ENCODE measurements at regions of chr2 and their contacts with region 1.

Region 1: GRCh38 chr2:168712049-168712448 is 90.4 kb upstream of the NOSTRIN start:
- DNase-seq: no peak
- H3K4me3 ChIP-seq: no peak overlapping the region
- H3K27ac ChIP-seq: no peak overlapping the region
- H3K4me1 ChIP-seq: no peaks in the 10 kb centered on the region
- H3K27me3 ChIP-seq: no peaks in the 10 kb centered on the region
- CTCF ChIP-seq: no peak

Region 2: GRCh38 chr2:168534926-168535325 is 177.1 kb before region 1 on chr2:
- CTCF ChIA-PET with region 1: no interaction called
- POLR2A ChIA-PET with region 1: no interaction called
- intact Hi-C with region 1: no loop called
- DNase-seq: no peak
- H3K4me3 ChIP-seq: no peak overlapping the region
- H3K27ac ChIP-seq: no peak overlapping the region
- H3K4me1 ChIP-seq: no peaks in the 10 kb centered on the region
- H3K27me3 ChIP-seq: no peaks in the 10 kb centered on the region
- CTCF ChIP-seq: no peak

Region 3: GRCh38 chr2:168545439-168546082 is 166.5 kb before region 1 on chr2:
- CTCF ChIA-PET with region 1: no interaction called
- POLR2A ChIA-PET with region 1: interaction called, 10 read pairs
- intact Hi-C with region 1: no loop called
- DNase-seq: peak; percentile 45 to 87
- H3K4me3 ChIP-seq: no peak overlapping the region
- H3K27ac ChIP-seq: peak overlapping the region; percentile 67
- H3K4me1 ChIP-seq: peaks cover 31% of the 10 kb centered on the region
- H3K27me3 ChIP-seq: no peaks in the 10 kb centered on the region
- CTCF ChIP-seq: no peak

Region 4: DNA sequence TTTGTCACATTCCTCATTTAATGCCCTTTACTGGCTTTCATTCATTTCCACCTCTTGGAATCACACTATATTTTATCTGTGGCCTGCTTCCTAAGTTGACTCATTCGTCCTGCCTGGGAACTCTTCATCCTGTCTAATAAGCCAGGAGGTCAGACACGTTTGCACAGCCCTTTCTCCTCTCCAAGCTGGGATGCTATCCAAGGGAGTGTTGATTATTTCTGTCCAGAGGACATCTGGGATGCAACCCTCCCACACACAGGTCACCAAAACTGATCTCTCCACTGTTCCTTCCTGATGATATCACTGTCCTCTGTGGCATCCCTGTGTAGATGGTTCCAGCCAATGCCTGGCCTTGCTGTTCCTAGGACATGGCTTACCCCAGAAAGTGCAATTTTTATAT is 10.5 kb after region 1 on chr2:
- CTCF ChIA-PET with region 1: no interaction called
- POLR2A ChIA-PET with region 1: no interaction called
- intact Hi-C with region 1: no loop called
- DNase-seq: no peak
- H3K4me3 ChIP-seq: no peak overlapping the region
- H3K27ac ChIP-seq: no peak overlapping the region
- H3K4me1 ChIP-seq: no peaks in the 10 kb centered on the region
- H3K27me3 ChIP-seq: no peaks in the 10 kb centered on the region
- CTCF ChIP-seq: no peak

Measured in PC-9 (cell line).